OCI-LY7 (cell line): ENCODE measurements at regions of chr20 and their contacts with region 1.

Region 1: GRCh38 chr20:38799203-38799602 is 6.3 kb upstream of the PPP1R16B start:
- DNase-seq: no peak
- H3K4me3 ChIP-seq: no peak overlapping the region
- H3K27ac ChIP-seq: no peak overlapping the region
- H3K4me1 ChIP-seq: peaks cover 2% of the 10 kb centered on the region
- CTCF ChIP-seq: no peak

Region 2: GRCh38 chr20:38748097-38748860 is 50.9 kb before region 1 on chr20 and contains the start of gene ACTR5:
- CTCF ChIA-PET with region 1: no interaction called
- POLR2A ChIA-PET with region 1: interaction called, 10 read pairs
- intact Hi-C with region 1: no loop called
- DNase-seq: peak; percentile 94
- H3K4me3 ChIP-seq: peak within 1 kb of the TSS; percentile 94
- H3K27ac ChIP-seq: peak within 1 kb of the TSS; percentile 62
- H3K4me1 ChIP-seq: peaks cover 24% of the 10 kb centered on the region
- CTCF ChIP-seq: no peak
- total RNA-seq, gene ACTR5: 21.1 and 22.2 TPM in 2 replicates

Region 3: GRCh38 chr20:38842558-38842981 is 43.4 kb after region 1 on chr20:
- CTCF ChIA-PET with region 1: no interaction called
- POLR2A ChIA-PET with region 1: no interaction called
- intact Hi-C with region 1: no loop called
- DNase-seq: peak; percentile 96
- H3K4me3 ChIP-seq: peak overlapping the region; percentile 57
- H3K27ac ChIP-seq: peak overlapping the region; percentile 99
- H3K4me1 ChIP-seq: peaks cover 83% of the 10 kb centered on the region
- CTCF ChIP-seq: no peak